Naive thymus-derived CD4-positive, alpha-beta T cell (primary cell): ENCODE measurements at regions of chr19 and their contacts with region 1.

Region 1: DNA sequence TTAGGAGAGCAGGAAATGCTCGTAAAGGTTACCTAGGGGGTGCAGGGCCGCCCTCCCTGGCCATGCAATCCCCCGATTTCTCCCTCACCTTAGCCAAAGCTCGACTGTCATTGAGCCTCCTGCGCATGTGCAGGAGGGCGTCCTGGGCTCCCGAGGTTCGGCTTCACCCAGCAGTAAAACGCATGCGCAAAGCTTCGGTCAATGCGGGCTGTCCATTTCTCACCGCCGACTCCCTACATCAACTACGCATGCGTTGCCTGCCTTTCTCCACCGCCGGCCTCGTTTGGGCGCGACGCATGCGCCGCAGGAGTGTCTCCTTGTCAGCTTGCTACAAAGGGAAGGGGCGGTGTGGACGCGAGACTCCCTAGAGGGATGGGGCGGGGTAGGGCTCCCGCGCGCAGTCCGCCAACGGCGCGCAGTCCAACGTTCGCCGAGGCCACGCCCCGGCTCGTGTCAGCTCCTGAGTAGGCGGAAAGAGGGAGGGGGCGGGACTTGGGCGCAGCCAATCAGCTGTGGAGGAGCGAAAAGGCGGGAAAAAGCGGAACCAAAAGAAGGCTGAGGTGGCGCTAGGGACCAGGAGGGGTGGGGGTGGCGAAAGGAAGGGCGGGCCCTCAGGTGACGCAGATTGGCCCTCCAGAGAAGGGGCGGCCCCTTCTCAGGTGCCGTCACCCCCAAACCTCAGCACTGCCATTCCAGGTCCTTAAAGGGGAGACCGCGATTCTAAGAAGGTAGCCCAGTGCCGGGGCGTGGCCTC is at the starts of genes SYNGR4 and TMEM143:
- DNase-seq: peak; percentile 91 to 100 (median 99)
- ATAC-seq: peak; percentile 96
- H3K4me3 ChIP-seq: peak within 1 kb of the TSS; percentile 87
- H3K4me3 Mint-ChIP-seq: peak within 1 kb of the TSS; percentile 80 to 97 (median 92)
- H3K27ac ChIP-seq: peak within 1 kb of the TSS; percentile 86
- H3K27ac Mint-ChIP-seq: peak within 1 kb of the TSS; percentile 89 to 98 (median 95)
- H3K4me1 ChIP-seq: peaks cover 9 to 13% of the 10 kb centered on the region in 2 donors
- H3K4me1 Mint-ChIP-seq: peaks cover 0 to 28% (median 6%) of the 10 kb centered on the region in 7 donors
- H3K27me3 ChIP-seq: no peaks in the 10 kb centered on the region
- H3K27me3 Mint-ChIP-seq: peaks cover 0 to 3% (median 0%) of the 10 kb centered on the region in 5 donors
- total RNA-seq, gene SYNGR4: not detected
- total RNA-seq, gene TMEM143: 11.6 to 39.8 (median 20.1) TPM

Region 2: DNA sequence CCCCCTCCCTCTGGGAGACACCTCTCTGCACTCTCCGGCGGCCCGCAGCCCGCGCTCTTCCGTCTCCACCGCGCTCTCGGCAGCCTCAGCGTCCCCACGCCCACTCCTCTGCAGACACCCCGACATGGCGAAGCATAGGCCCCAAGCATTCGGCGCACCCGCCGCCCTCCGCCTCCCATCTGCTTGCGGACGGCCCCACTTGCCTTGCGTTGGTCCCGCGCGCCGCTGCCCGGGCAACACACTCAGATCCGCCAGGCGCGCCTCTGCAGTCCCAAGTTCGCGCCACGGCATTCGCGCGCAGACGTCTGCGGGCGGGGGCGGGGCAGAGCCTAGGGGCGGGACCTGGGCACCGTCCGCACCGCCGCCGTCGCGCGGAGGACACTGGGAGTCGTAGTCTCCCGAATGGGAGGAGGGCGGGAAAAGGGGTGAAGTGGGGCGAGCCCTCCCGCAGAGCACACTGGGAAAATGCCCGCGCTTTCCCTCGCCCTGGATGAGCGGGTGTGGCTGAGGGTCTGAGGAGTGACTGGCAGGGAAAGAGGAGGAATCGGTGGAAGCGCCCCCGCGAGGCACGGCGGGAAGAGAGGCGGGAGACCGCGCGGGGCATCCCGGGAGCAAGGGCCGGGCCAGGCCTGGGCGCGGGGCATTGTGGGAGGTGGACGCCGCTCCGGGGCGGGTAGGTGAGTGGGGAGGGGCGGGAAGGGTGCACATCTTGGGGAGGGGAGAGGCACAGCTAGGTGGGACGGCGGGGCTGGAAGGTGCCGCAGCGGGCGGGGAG is 193.8 kb before region 1 on chr19 and contains the starts of genes LIG1 and ZSWIM9:
- CTCF ChIA-PET with region 1: no interaction called
- POLR2A ChIA-PET with region 1: interaction called, 3 read pairs
- intact Hi-C with region 1: loop called (anchors 1 kb)
- DNase-seq: peak; percentile 87 to 96 (median 94)
- ATAC-seq: peak; percentile 89
- H3K4me3 ChIP-seq: peak within 1 kb of the TSS; percentile 98
- H3K4me3 Mint-ChIP-seq: peak within 1 kb of the TSS; percentile 90 to 100 (median 97)
- H3K27ac ChIP-seq: peak within 1 kb of the TSS; percentile 94
- H3K27ac Mint-ChIP-seq: peak within 1 kb of the TSS; percentile 92 to 100 (median 97)
- H3K4me1 ChIP-seq: peaks cover 14 to 16% of the 10 kb centered on the region in 2 donors
- H3K4me1 Mint-ChIP-seq: peaks cover 20 to 44% (median 32%) of the 10 kb centered on the region in 7 donors
- H3K27me3 ChIP-seq: no peaks in the 10 kb centered on the region
- H3K27me3 Mint-ChIP-seq: no peaks in the 10 kb centered on the region
- total RNA-seq, gene LIG1: 61.0 to 134 (median 122) TPM
- total RNA-seq, gene ZSWIM9: 5.0 to 11.6 (median 7.4) TPM

Region 3: DNA sequence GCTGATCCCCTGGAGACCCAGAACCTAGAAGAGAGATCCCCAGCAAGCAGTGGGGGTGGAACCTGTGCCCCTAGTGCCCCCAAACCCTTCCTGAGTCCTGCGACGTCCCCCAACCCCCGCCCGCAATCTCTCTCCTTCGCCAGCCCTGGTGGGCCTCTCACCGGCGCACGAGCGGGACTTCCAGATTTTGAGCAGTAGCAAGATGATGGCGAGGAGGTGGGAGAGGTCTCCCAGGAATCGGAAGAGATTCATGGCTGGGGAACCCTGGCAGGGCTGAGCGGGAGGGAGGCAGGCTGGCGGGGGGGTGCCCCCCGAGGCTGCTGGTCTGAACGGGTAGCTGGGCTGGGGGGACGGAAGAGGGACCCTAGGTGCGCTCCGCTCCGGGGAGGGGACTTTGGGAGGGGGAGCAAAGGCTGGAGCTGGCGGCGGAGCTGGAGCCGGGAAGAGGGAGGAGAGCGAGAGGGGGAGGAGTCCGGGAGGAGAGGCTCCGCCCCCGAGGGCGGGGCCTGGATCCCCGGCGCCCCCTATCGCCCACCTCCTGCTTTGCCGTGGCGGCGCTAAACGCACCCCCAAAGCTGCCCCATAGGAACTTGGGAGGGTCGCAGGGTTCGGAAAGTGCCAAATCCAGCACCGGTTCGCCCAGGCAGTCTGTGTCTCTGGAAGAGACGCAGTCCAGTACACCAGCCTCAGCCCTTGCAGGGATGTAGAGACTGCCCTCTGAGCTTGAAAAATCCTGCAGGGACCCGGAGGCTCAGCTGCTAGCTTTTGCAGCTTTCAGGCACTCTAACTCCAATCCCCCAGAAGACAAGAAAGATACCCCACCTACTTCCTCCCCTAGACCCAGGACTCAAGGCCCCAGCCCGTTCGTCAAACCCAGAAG is 27.4 kb after region 1 on chr19 and contains the start of gene KDELR1:
- CTCF ChIA-PET with region 1: interaction called, 6 read pairs
- POLR2A ChIA-PET with region 1: interaction called, 11 read pairs
- intact Hi-C with region 1: loop called (anchors 1 kb)
- DNase-seq: peak; percentile 55 to 89 (median 72)
- ATAC-seq: peak; percentile 92
- H3K4me3 ChIP-seq: peak within 1 kb of the TSS; percentile 96
- H3K4me3 Mint-ChIP-seq: peak within 1 kb of the TSS; percentile 84 to 95 (median 92)
- H3K27ac ChIP-seq: peak within 1 kb of the TSS; percentile 92
- H3K27ac Mint-ChIP-seq: peak within 1 kb of the TSS; percentile 78 to 97 (median 93)
- H3K4me1 ChIP-seq: peaks cover 15 to 32% of the 10 kb centered on the region in 2 donors
- H3K4me1 Mint-ChIP-seq: peaks cover 5 to 46% (median 36%) of the 10 kb centered on the region in 7 donors
- H3K27me3 ChIP-seq: peaks cover 9 to 21% of the 10 kb centered on the region in 2 donors
- H3K27me3 Mint-ChIP-seq: peaks cover 9 to 42% (median 21%) of the 10 kb centered on the region in 5 donors
- total RNA-seq, gene KDELR1: 42.7 to 73.9 (median 52.3) TPM

Region 4: DNA sequence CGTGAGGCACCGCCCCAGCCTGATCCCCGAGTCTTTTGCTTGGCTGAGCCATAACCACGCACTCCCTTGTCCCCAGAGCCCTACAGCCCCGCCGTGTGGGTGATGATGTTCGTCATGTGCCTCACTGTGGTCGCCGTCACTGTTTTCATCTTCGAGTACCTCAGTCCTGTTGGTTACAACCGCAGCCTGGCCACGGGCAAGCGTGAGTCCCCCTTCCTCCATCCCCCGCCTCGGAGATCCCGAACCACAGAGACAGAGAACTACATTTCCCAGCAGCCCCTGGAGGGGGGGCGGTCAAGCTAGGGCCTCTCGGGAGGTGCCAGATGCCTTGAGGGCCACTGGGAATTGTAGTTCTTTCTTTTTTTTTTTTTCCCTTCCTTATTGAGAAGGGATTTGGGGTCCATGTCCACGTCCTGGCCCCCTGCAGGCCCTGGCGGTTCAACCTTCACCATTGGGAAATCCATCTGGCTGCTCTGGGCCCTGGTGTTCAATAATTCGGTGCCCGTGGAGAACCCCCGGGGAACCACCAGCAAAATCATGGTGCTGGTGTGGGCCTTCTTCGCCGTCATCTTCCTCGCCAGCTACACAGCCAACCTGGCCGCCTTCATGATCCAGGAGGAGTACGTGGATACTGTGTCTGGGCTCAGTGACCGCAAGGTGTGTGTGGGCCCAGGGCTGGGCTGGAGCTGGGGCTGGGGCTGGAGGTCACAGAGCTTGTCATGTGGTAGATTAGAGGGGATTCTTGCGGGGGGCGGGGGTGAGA is 55.4 kb after region 1 on chr19:
- CTCF ChIA-PET with region 1: no interaction called
- POLR2A ChIA-PET with region 1: no interaction called
- intact Hi-C with region 1: loop called in 1 of 2 experiments (anchors 1 kb)
- DNase-seq: peak; percentile 44 to 77 (median 64)
- ATAC-seq: peak; percentile 79
- H3K4me3 ChIP-seq: peak overlapping the region; percentile 15
- H3K4me3 Mint-ChIP-seq: peak overlapping the region; percentile 60 to 90 (median 80)
- H3K27ac ChIP-seq: no peak overlapping the region
- H3K27ac Mint-ChIP-seq: peak overlapping the region in 6 of 9 donors; percentile 6 to 93 (median 74)
- H3K4me1 ChIP-seq: peaks cover 0 to 5% of the 10 kb centered on the region in 2 donors
- H3K4me1 Mint-ChIP-seq: peaks cover 12 to 30% (median 22%) of the 10 kb centered on the region in 7 donors
- H3K27me3 ChIP-seq: no peaks in the 10 kb centered on the region
- H3K27me3 Mint-ChIP-seq: peaks cover 0 to 22% (median 5%) of the 10 kb centered on the region in 5 donors

Region 5: DNA sequence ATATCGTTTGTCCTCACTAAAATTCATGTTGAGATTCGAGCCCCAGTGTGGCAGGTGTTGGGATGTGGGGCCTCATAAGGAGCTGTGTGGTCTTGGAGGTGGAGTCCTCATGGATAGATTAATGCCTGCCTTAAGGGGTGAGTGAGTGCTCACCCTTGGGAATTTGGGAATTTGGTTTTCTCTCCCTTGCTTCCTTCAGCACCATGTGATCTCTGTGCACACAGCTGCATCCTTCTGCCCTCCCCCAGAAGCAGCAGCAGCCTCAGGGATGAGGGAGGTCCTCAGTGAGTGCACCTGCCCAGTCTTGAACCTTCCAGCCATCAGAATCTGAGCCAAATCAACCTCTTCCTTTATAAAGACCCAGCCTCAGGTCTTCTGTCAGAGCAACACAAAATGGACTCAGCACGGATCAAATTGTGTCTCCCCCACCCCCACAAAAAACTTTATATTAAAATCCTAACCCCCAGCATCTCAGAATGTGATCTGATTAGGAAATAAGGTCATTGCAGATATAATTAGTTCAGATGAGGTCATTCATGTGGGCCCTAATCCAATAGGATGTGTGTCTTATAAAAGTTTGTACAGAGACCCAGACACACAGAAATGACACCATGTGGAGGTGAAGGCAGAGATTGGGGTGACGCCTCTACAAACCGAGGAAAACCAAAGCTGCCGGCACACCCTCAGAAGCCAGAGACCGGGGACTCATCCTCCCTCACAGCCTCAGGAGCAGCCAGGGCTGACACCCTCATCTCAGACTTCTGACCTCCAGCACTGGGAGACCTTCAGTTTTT is 118.1 kb after region 1 on chr19:
- CTCF ChIA-PET with region 1: no interaction called
- POLR2A ChIA-PET with region 1: no interaction called
- intact Hi-C with region 1: no loop called
- DNase-seq: no peak
- ATAC-seq: no peak
- H3K4me3 ChIP-seq: no peak overlapping the region
- H3K4me3 Mint-ChIP-seq: peak overlapping the region in 9 of 10 donors; percentile 28 to 89 (median 84)
- H3K27ac ChIP-seq: no peak overlapping the region
- H3K27ac Mint-ChIP-seq: peak overlapping the region in 8 of 9 donors; percentile 3 to 89 (median 68)
- H3K4me1 ChIP-seq: peaks cover 3 to 9% of the 10 kb centered on the region in 2 donors
- H3K4me1 Mint-ChIP-seq: peaks cover 6 to 29% (median 22%) of the 10 kb centered on the region in 7 donors
- H3K27me3 ChIP-seq: no peaks in the 10 kb centered on the region
- H3K27me3 Mint-ChIP-seq: no peaks in the 10 kb centered on the region

Region 6: GRCh38 chr19:48492925-48493717 is 129.1 kb after region 1 on chr19:
- CTCF ChIA-PET with region 1: interaction called, 3 read pairs
- POLR2A ChIA-PET with region 1: interaction called, 4 read pairs
- intact Hi-C with region 1: loop called in 1 of 2 experiments (anchors 5 kb)
- DNase-seq: peak; percentile 69 to 87 (median 78)
- ATAC-seq: peak; percentile 87
- H3K4me3 ChIP-seq: peak overlapping the region; percentile 41
- H3K4me3 Mint-ChIP-seq: peak overlapping the region; percentile 58 to 84 (median 72)
- H3K27ac ChIP-seq: no peak overlapping the region
- H3K27ac Mint-ChIP-seq: peak overlapping the region; percentile 20 to 86 (median 67)
- H3K4me1 ChIP-seq: peaks cover 4 to 25% of the 10 kb centered on the region in 2 donors
- H3K4me1 Mint-ChIP-seq: peaks cover 17 to 51% (median 43%) of the 10 kb centered on the region in 7 donors
- H3K27me3 ChIP-seq: no peaks in the 10 kb centered on the region
- H3K27me3 Mint-ChIP-seq: peaks cover 0 to 57% (median 6%) of the 10 kb centered on the region in 5 donors